ENCODE measurements at regions of chrX and their contacts with region 1.

Region 1: GRCh38 chrX:30313322-30313721 is 4.1 kb upstream of the NR0B1 start:
- DNase-seq: no peak
- H3K4me3 ChIP-seq: no peak overlapping the region
- H3K27ac ChIP-seq: no peak overlapping the region
- H3K4me1 ChIP-seq: no peaks in the 10 kb centered on the region
- H3K27me3 ChIP-seq: no peaks in the 10 kb centered on the region
- CTCF ChIP-seq: no peak
- EP300 ChIP-seq: no peak
- POLR2A ChIP-seq: no peak

Region 2: GRCh38 chrX:30373479-30373878 is 60.2 kb after region 1 on chrX:
- intact Hi-C with region 1: loop called in 1 of 4 experiments (anchors 10 kb)
- DNase-seq: no peak
- H3K4me3 ChIP-seq: no peak overlapping the region
- H3K27ac ChIP-seq: no peak overlapping the region
- H3K4me1 ChIP-seq: no peaks in the 10 kb centered on the region
- H3K27me3 ChIP-seq: peaks cover 2% of the 10 kb centered on the region
- CTCF ChIP-seq: no peak
- EP300 ChIP-seq: no peak
- POLR2A ChIP-seq: no peak